ENCODE measurements at regions of chr5 and their contacts with region 1.

Region 1: DNA sequence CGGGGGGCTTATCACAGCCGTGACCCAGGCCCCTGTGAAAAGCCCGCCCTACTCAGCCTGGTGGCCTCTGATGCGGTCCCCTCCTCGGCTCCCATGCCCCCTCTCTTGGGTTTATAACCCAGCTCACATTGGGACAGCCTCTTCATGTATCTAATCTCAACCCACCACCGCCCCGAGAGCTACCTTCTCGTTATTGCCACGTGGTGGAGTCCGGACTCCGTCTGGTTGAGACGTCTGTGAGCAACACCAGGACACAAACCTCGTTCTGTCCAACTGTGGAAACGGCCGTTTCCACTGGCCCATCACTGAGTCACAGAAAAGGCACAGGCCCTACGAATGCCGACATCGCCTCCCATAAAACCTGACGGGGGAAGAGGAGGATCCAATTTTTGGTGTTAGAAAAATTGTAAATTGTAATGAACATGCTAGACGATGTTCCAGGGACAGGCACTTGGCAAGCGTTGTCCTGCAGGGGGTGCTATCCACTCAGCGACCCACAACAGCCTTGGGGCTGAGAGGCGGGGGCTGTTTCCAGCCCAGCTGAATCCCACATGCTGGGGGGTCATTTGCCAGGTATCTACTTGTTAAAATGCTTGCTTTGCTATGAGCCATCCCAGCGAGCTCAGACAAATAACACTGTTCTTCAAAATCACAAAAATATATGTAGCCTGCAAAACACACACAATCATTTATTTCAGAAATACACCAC is 37.3 kb upstream of the N4BP3 start:
- H3K4me3 Mint-ChIP-seq: no peak overlapping the region
- H3K27ac Mint-ChIP-seq: no peak overlapping the region
- H3K4me1 Mint-ChIP-seq: peaks cover 5% of the 10 kb centered on the region
- H3K27me3 Mint-ChIP-seq: peaks cover 21% of the 10 kb centered on the region

Region 2: GRCh38 chr5:177607452-177608192 is 468.4 kb before region 1 on chr5:
- intact Hi-C with region 1: no loop called
- H3K4me3 Mint-ChIP-seq: no peak overlapping the region
- H3K27ac Mint-ChIP-seq: no peak overlapping the region
- H3K4me1 Mint-ChIP-seq: peaks cover 14% of the 10 kb centered on the region
- H3K27me3 Mint-ChIP-seq: no peaks in the 10 kb centered on the region

Region 3: GRCh38 chr5:178146020-178146820 is 70.2 kb after region 1 on chr5:
- intact Hi-C with region 1: loop called (anchors 1 kb)
- H3K4me3 Mint-ChIP-seq: no peak overlapping the region
- H3K27ac Mint-ChIP-seq: no peak overlapping the region
- H3K4me1 Mint-ChIP-seq: peaks cover 4% of the 10 kb centered on the region
- H3K27me3 Mint-ChIP-seq: no peaks in the 10 kb centered on the region

Region 4: DNA sequence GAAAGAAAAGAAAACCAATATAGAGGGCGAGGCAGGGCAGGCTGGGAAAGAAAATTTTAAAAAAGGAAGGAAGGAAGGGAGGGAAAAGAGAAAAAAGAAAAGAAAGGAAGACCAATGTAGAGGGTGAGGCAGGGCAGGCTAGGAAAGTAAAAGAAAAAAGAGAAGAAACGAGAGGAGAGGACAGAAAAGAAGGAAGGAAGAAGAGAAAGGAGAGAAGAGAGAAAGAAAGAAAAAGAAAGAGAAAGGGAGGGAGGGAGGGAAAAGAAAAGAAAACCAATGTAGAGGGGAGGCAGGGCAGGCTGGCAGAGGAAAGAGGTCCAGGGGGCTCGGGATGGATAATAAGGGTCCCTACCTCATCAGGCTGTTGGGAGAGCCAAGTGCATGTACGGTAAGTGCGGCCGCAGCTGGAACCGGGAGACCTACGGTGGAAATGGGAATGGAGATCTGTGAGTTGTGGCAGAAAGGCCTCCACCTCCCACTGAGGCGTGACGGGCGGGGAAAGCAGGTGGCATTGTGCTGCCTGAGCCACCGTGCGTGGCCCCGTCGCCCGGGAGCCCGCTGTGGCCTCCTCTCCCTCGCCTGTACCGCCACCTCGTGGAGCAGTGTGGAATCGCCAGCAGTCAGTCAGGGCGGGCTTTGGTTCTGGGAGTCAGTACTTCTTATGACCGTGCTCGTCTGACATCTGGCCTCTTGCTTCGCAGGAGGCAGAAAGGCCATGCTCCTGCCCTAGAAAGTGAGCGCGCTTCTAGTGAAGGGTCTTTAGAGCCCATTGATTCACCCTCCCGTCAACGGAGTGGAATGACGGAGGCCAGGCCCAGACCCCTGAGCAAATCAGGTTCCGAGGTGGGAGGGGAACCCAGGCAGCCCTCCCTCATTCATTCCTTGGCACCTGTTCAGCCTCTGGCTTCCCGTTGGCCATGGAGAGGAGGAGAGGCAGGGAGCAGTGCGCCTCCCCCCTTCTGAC is 88.1 kb after region 1 on chr5:
- intact Hi-C with region 1: loop called (anchors 1 kb)
- H3K4me3 Mint-ChIP-seq: peak overlapping the region; percentile 54
- H3K27ac Mint-ChIP-seq: no peak overlapping the region
- H3K4me1 Mint-ChIP-seq: peaks cover 17% of the 10 kb centered on the region
- H3K27me3 Mint-ChIP-seq: peaks cover 37% of the 10 kb centered on the region

Measured in dendritic cell treated with granulocyte-macrophage colony-stimulating factor and Interleukin-4, amounts not matched to agents 40 ng/mL and 50 ng/mL, for 4 days (primary cell).